Activated naive CD4-positive, alpha-beta T cell treated with anti-CD3 and anti-CD28 coated beads for 36 hours (primary cell): ENCODE measurements at regions of chr12 and their contacts with region 1.

Region 1: DNA sequence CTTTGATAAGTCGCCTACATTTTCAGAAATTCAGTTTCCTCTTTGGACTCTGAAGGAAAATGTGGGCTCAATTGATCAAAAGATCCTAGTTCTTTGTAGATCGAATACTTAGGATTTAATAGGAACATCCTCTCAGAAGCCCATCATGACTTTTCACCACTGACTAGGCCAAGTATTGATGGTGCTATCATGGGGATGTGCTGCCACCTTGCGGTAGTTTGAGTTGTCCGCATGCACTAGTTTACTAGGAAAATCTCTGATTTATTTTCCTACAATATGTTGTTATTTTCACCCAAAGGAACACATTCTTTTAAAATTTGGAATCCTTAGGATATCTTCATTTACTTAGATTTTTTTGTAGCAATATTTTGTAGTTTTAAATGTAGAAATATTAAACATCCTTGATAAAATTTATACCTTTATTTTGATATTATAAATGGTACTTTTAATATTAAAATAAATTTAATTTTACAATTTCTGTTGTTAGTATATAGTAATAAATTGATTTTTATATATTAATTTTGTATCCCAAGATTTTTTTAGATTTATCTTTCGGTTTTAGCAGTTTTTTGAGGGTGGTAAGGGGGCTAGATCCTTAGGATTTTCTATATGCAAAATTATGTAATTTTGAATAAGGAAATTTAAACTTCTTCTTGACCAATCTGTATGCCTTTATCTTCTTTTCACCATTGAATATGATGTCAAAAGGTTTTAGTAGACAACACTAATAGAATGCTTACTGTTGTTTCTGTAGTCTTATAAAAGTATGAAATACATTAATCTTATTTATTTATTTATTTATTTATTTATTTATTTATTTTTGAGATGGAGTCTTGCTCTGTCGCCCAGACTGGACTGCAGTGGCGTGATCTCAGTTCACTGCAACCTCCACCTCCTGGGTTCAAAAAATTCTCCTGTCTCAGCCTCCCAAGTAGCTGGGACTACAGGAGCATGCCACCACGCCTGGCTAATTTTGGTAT is 52.9 kb upstream of the OR9K2 start:
- DNase-seq: peak; percentile 90
- H3K4me3 Mint-ChIP-seq: no peak overlapping the region
- H3K27ac Mint-ChIP-seq: no peak overlapping the region
- H3K4me1 Mint-ChIP-seq: peaks cover 3% of the 10 kb centered on the region
- H3K27me3 Mint-ChIP-seq: peaks cover 21% of the 10 kb centered on the region

Region 2: DNA sequence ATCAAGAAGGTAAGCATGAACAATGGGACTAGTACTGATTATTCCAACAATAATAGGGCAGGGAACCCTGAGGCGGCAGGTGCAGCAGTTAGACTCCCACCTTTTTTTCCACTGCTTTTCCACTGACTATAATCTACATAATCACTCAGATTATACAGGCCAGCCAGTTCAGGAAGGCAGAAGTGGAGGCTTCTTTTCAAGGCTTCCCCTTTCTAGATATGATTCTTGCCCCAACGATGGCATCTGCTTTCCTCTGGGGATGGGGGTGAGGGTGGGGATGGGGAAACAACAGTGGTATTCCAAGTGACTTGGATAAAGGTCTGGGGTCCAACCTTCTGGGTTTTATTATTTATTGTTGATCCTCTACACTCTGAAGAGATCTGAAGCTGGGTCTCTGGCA is 575.5 kb before region 1 on chr12:
- CTCF ChIA-PET with region 1: no interaction called
- intact Hi-C with region 1: no loop called
- DNase-seq: no peak
- H3K4me3 Mint-ChIP-seq: peak overlapping the region; percentile 95
- H3K27ac Mint-ChIP-seq: peak overlapping the region; percentile 97
- H3K4me1 Mint-ChIP-seq: peaks cover 36% of the 10 kb centered on the region
- H3K27me3 Mint-ChIP-seq: no peaks in the 10 kb centered on the region

Region 3: GRCh38 chr12:54658306-54659264 is 414.7 kb before region 1 on chr12:
- CTCF ChIA-PET with region 1: interaction called, 12 read pairs
- intact Hi-C with region 1: loop called (anchors 5 kb)
- DNase-seq: peak; percentile 72
- H3K4me3 Mint-ChIP-seq: no peak overlapping the region
- H3K27ac Mint-ChIP-seq: no peak overlapping the region
- H3K4me1 Mint-ChIP-seq: no peaks in the 10 kb centered on the region
- H3K27me3 Mint-ChIP-seq: peaks cover 2% of the 10 kb centered on the region

Region 4: GRCh38 chr12:54749191-54749818 is 324.0 kb before region 1 on chr12:
- CTCF ChIA-PET with region 1: interaction called, 125 read pairs
- intact Hi-C with region 1: loop called (anchors 1 kb)
- DNase-seq: peak; percentile 58
- H3K4me3 Mint-ChIP-seq: no peak overlapping the region
- H3K27ac Mint-ChIP-seq: no peak overlapping the region
- H3K4me1 Mint-ChIP-seq: peaks cover 25% of the 10 kb centered on the region
- H3K27me3 Mint-ChIP-seq: no peaks in the 10 kb centered on the region

Region 5: DNA sequence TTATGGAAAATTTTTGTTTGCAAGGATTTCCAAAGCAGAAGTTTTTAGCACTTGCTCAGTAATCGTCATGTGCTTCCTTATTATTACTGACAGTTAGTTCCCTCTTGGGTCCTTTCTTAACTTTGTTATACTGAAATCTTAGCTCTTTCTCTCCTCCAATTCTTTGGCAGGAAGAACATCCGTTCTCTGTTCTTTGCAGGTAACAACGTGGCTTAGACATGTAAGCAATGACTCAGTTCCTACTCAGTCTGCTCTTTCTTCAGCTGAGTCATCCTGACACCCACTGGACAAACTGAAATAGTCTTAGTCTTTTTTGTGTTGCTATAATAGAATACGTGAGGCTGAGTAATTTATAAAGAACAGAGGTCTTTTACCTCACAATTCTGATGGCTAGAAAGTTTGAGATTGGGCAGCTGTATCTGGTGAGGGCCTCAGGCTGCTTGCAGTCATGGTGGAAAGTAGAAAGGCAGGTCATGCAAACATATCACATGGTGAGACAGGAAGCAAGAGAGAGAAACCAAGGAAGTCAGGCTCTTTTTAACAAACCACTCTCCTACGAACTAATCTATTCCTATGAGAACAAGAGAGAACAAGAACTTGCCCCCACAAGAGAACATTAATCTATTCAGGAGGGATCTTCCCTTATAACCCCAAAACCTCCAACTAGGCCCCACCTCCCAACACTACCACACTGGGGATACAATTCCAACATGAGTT is 137.9 kb before region 1 on chr12:
- CTCF ChIA-PET with region 1: interaction called, 5 read pairs
- intact Hi-C with region 1: loop called (anchors 2 kb)
- DNase-seq: peak; percentile 69
- H3K4me3 Mint-ChIP-seq: peak overlapping the region; percentile 51
- H3K27ac Mint-ChIP-seq: peak overlapping the region; percentile 93
- H3K4me1 Mint-ChIP-seq: peaks cover 64% of the 10 kb centered on the region
- H3K27me3 Mint-ChIP-seq: no peaks in the 10 kb centered on the region

Region 6: DNA sequence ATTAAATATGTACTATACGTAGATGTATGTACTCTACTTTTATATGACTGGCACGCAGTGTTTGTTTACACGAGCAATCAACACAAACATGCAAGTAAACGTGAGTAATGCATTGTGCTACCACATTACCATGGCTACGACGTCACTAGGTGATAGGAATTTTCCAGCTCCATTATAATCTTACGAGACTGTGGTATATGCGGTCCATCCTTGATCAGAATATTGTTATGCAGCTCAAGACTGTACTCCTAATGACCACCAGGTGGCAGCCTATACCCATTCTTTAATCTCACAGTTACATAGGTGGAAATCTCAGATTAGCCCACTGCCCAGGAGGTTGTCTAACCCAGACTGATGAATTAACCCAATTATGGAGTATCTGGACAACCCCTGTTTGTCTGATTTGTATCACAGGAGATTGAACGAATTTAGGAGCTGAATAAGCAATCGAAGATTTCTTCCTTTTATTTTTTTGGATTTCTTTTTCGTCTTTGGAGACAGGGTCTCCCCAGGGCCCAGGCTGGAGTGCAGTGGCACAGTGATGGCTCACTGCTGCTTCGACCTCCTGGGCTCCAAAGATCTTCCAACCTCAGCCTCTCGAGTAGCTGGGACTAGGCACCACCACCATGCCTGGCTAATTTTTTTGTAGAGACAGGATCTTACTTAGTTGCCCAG is 80.0 kb before region 1 on chr12:
- CTCF ChIA-PET with region 1: interaction called, 552 read pairs
- intact Hi-C with region 1: loop called (anchors 1 kb)
- DNase-seq: peak; percentile 72
- H3K4me3 Mint-ChIP-seq: no peak overlapping the region
- H3K27ac Mint-ChIP-seq: no peak overlapping the region
- H3K4me1 Mint-ChIP-seq: peaks cover 41% of the 10 kb centered on the region
- H3K27me3 Mint-ChIP-seq: no peaks in the 10 kb centered on the region

Region 7: DNA sequence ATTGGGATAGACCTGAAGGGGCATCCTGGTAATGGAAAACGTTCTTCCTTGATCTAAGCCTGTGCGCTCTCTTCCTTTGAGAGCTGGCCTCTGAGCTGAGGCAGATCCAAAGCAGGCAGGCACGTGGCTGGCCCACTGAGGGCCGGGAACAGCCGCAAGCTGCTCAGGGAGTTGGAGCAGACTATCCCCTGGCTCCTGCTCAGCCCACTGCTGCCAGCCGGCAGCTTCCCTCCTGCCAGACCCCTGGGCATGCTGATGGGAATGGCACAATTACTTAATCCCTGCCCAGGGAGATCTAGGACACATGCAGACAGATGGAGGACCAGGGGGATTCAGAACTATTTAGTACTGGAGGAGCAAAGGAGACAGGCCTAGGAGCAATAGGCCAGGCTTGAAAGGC is 39.1 kb before region 1 on chr12:
- CTCF ChIA-PET with region 1: interaction called, 12 read pairs
- intact Hi-C with region 1: no loop called
- DNase-seq: no peak
- H3K4me3 Mint-ChIP-seq: no peak overlapping the region
- H3K27ac Mint-ChIP-seq: no peak overlapping the region
- H3K4me1 Mint-ChIP-seq: peaks cover 42% of the 10 kb centered on the region
- H3K27me3 Mint-ChIP-seq: no peaks in the 10 kb centered on the region

Region 8: DNA sequence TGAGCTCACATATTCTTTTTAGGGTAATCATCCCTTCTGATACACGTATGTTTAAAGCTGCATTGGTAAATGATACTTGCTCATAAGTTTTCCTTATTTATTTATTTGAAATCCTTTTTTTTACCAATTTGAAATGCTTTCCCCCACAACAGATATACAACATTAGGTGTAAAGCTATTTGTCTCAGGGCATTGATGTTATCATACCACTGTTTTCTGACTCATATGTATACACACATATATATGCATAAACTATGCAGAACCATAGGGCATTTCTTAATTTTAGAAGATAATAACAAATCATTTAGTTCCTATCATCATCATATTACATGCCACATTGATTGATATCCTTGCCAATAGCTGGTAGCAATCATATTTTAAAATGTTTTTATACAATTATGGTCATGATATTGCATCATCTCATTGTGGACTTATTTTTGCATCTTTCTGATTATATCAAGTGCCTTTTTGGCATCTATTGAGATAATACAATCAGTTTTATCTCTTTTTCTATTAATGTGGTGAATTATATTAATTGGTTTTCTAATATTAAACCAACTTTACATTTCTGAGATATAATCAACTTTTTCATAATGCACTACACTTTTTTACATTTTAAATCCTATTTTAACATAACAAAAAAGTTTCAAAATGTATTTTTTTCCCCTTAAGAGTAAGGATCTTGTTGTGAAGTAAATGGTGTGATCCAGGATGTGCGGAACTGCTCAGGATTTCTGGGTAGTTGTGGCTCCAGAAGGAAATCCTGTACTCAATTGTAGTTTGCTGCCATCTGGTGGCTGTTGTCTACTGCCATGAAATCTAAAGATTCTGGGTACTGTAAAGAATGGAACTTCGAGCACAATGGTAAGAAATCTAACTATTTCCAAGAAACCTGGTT is 69.6 kb after region 1 on chr12:
- CTCF ChIA-PET with region 1: interaction called, 8 read pairs
- intact Hi-C with region 1: loop called (anchors 1 kb)
- DNase-seq: peak; percentile 70
- H3K4me3 Mint-ChIP-seq: no peak overlapping the region
- H3K27ac Mint-ChIP-seq: no peak overlapping the region
- H3K4me1 Mint-ChIP-seq: no peaks in the 10 kb centered on the region
- H3K27me3 Mint-ChIP-seq: no peaks in the 10 kb centered on the region